ENCODE measurements at regions of chr12 and their contacts with region 1.

Region 1: DNA sequence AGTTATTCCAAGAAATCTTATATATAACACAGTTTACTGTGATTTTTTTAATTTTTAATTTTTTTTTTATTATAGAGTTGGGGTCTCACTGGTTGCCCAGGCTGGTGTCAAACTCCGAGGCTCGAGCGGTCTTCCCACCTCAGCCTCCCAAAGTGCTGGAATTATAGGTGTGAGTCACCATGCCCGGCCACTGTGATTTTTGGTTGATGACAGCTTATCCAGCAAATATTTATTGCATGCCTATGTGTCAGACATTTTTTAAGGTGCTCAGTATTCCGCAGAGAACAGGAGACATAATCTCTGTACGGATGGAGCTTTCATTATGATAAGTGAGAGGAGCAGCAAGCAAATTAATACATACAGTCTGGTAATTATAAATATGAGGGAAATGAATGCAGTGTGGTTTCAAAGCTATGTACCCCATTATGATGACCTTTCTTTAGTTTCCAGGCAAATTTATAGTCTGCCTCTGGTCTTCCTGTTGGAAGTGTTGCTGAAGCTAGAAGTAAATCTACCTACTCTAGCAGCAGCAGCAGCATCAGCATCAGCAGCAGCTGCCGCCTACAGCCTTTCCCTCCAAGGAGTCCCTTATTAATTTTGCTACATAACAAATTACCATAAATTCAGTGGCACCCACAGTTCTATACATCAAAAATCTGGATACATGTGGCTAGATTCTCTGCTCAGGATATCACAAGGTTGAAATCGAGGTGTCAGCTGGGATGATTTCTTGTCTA is 32.3 kb downstream of the FRS2 start:
- DNase-seq: peak; percentile 89
- ATAC-seq: peak; percentile 82
- H3K4me3 ChIP-seq: peak overlapping the region; percentile 31
- H3K27ac ChIP-seq: peak overlapping the region; percentile 7; the same call in 1 of the 2 replicates
- H3K4me1 ChIP-seq: peaks cover 53% of the 10 kb centered on the region
- H3K27me3 ChIP-seq: no peaks in the 10 kb centered on the region
- CTCF ChIP-seq: no peak

Region 2: DNA sequence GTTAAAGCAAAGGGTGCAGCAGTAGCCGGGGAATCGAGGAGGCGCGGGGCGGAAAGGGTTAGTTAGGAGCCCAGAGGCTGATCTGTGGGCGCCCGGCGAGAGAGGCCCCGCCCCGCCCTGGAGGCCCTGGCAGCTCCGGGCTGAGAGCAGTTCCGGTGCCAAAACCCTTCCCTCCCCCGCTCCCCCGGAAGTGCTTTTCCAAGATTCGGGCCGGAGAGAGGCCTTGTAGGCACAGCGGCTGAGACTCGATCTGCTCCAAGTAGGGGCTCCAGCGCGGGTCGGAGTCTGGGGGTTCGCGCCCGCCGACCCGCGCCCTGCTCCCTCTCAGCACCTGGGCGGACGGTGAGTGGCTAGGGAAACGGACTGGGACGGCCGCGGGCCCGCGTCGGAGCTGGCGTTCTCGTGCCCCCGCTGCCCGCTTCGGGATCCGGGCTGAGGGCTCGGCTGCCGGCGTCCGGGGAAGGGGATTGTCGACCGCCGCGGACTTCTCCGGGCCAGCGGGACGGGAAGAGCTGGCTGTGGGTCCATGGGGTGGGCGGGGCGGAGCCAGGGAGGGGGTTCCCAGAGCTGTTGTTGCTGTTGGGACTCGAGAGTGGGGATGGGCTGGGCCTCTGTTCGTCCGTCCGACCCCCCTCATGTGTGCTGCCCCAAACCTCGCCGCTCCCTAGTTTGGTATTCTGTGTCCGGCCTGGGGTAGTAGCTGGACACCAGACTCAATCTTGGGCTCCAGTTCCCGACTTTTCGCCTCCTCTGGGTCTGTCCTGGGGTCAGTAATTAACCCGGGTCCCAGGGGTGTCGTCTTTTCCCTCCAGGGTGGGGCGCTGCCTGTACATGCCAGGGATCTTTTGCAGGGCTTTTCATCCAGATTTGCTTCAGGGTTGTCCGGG is 32.1 kb before region 1 on chr12 and contains the start of gene FRS2:
- CTCF ChIA-PET with region 1: no interaction called
- POLR2A ChIA-PET with region 1: no interaction called
- intact Hi-C with region 1: loop called (anchors 2 kb)
- DNase-seq: peak; percentile 88
- ATAC-seq: peak; percentile 95
- H3K4me3 ChIP-seq: peak within 1 kb of the TSS; percentile 90
- H3K27ac ChIP-seq: peak within 1 kb of the TSS; percentile 43
- H3K4me1 ChIP-seq: peaks cover 11% of the 10 kb centered on the region; the same call in 1 of the 2 replicates
- H3K27me3 ChIP-seq: no peaks in the 10 kb centered on the region
- CTCF ChIP-seq: peak; percentile 61
- total RNA-seq, gene FRS2: 17.6 and 35.0 TPM in 2 replicates

Region 3: DNA sequence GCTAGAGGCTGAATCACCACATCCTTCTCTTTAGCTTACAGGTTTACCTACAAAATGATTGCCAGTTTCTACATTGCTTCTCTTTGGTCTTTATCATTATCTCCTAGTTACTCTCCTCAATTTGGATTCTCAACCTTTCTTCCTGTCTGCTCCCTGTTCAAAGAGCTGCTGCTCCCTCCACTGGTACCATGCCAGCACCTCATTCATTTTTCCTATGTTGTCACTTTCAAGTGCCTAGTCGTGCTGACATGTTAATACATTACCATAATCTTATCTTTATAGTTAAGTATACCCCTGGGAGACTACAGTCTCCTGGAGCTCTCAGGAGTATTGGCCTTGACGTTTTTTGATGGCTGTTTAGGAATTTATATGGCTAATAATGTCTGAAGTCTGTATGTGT is 18.1 kb before region 1 on chr12:
- CTCF ChIA-PET with region 1: no interaction called
- POLR2A ChIA-PET with region 1: no interaction called
- intact Hi-C with region 1: no loop called
- DNase-seq: no peak
- ATAC-seq: no peak
- H3K4me3 ChIP-seq: no peak overlapping the region
- H3K27ac ChIP-seq: no peak overlapping the region
- H3K4me1 ChIP-seq: no peaks in the 10 kb centered on the region
- H3K27me3 ChIP-seq: no peaks in the 10 kb centered on the region
- CTCF ChIP-seq: no peak

Region 4: GRCh38 chr12:69524755-69525469 is 22.4 kb after region 1 on chr12:
- CTCF ChIA-PET with region 1: no interaction called
- POLR2A ChIA-PET with region 1: no interaction called
- intact Hi-C with region 1: loop called (anchors 2 kb)
- DNase-seq: peak; percentile 16
- ATAC-seq: peak; percentile 69
- H3K4me3 ChIP-seq: no peak overlapping the region
- H3K27ac ChIP-seq: no peak overlapping the region
- H3K4me1 ChIP-seq: peaks cover 28% of the 10 kb centered on the region
- H3K27me3 ChIP-seq: no peaks in the 10 kb centered on the region
- CTCF ChIP-seq: no peak

Region 5: GRCh38 chr12:69534389-69534822 is 31.9 kb after region 1 on chr12:
- CTCF ChIA-PET with region 1: no interaction called
- POLR2A ChIA-PET with region 1: no interaction called
- intact Hi-C with region 1: loop called (anchors 5 kb)
- DNase-seq: peak; percentile 28
- ATAC-seq: peak; percentile 37; the same call in 1 of the 2 replicates
- H3K4me3 ChIP-seq: no peak overlapping the region
- H3K27ac ChIP-seq: no peak overlapping the region
- H3K4me1 ChIP-seq: peaks cover 14% of the 10 kb centered on the region; the same call in 1 of the 2 replicates
- H3K27me3 ChIP-seq: no peaks in the 10 kb centered on the region
- CTCF ChIP-seq: no peak

Measured in PC-3 (cell line).